Panc1 (cell line): ENCODE measurements at regions of chr2 and their contacts with region 1.

Region 1: DNA sequence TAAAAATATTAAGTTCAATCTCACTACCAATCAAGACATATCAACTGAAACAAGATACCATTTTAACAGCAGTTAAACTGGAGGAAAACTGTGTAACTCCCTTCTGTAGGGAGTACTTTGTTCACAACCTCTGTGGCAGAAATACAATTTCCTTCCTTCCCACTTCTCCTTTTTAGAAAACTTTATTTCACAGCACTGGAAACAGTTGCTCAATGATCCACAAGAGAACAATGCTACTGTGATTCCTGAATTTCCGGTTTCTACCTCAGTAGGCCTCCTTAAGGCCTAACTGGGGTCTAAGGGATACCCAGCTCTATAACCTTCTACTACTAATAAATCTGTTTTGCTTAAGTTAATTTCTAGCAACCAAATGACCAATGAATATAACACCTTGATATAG is 14.1 kb downstream of the TLK1 start:
- DNase-seq: no peak
- ATAC-seq: no peak
- H3K4me3 ChIP-seq: no peak overlapping the region
- H3K27ac ChIP-seq: no peak overlapping the region
- H3K4me1 ChIP-seq: peaks cover 15% of the 10 kb centered on the region; the same call in 1 of the 2 replicates
- H3K27me3 ChIP-seq: no peaks in the 10 kb centered on the region
- CTCF ChIP-seq: no peak

Region 2: GRCh38 chr2:171325886-171326585 is 179.4 kb after region 1 on chr2:
- CTCF ChIA-PET with region 1: no interaction called
- POLR2A ChIA-PET with region 1: interaction called, 15 read pairs
- in situ Hi-C with region 1: no loop called
- intact Hi-C with region 1: no loop called
- DNase-seq: no peak
- ATAC-seq: no peak
- H3K4me3 ChIP-seq: no peak overlapping the region
- H3K27ac ChIP-seq: no peak overlapping the region
- H3K4me1 ChIP-seq: no peaks in the 10 kb centered on the region
- H3K27me3 ChIP-seq: no peaks in the 10 kb centered on the region
- CTCF ChIP-seq: no peak